ENCODE measurements at regions of chr18 and their contacts with region 1.

Region 1: GRCh38 chr18:9971313-9971920 is 57.6 kb downstream of the VAPA start:
- DNase-seq: peak; percentile 37 to 82 (median 56)
- ATAC-seq: peak; percentile 61
- H3K4me3 ChIP-seq: no peak overlapping the region
- H3K4me3 Mint-ChIP-seq: no peak overlapping the region
- H3K27ac ChIP-seq: no peak overlapping the region
- H3K27ac Mint-ChIP-seq: no peak overlapping the region
- H3K4me1 ChIP-seq: peaks cover 15% of the 10 kb centered on the region
- H3K4me1 Mint-ChIP-seq: peaks cover 23% of the 10 kb centered on the region
- H3K27me3 ChIP-seq: peaks cover 20 to 27% of the 10 kb centered on the region in 2 experiments
- H3K27me3 Mint-ChIP-seq: peaks cover 34% of the 10 kb centered on the region
- CTCF ChIP-seq: peak; percentile 90

Region 2: DNA sequence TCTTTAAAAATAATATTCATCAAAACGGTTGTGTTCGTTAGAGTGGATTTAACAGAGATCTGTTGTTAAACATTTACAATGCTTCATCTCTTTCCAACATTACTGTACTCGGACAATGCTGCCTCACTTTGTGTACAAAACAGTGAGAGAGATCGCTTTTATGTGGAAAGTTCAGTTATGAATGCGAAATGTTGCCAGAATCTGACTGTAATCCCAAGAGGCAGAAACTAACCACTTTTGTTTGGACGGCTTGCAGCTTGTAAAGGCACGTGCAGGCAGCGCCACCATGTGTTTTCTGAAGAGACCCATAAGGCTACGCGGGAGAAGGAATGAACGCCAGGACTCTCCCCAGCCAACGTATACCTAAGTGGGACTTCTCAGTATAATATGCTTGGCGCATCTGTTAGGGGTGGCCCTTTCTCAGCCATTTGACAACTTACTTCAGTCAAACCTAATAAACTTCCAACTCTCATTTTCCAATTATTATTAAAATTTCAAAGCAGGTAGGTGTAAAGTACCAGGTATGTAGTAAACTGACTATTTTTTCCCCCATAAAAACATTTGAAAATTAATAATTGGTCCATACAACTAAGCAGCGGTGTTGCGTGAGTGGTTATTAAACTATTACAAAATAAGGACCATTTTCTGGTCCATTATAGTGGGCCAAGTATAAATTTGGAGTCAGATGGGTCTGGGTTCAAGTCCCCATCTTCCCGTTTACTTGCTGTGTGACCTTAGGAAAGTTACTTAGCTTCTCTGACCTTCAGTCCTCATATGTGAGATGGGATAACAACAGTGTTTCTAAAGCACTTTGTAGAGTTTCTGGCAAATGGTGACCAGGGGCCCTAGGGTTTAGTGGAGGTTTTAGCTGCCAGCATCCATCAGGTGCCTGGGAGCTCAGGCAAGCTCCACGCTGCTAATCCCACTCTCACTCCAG is 548.9 kb after region 1 on chr18:
- CTCF ChIA-PET with region 1: interaction called, 14 read pairs
- POLR2A ChIA-PET with region 1: no interaction called
- intact Hi-C with region 1: loop called (anchors 1 kb)
- DNase-seq: peak; percentile 16 to 83 (median 46)
- ATAC-seq: peak; percentile 96
- H3K4me3 ChIP-seq: no peak overlapping the region
- H3K4me3 Mint-ChIP-seq: no peak overlapping the region
- H3K27ac ChIP-seq: no peak overlapping the region
- H3K27ac Mint-ChIP-seq: no peak overlapping the region
- H3K4me1 ChIP-seq: peaks cover 11% of the 10 kb centered on the region
- H3K4me1 Mint-ChIP-seq: peaks cover 17% of the 10 kb centered on the region
- H3K27me3 ChIP-seq: peaks cover 16 to 21% of the 10 kb centered on the region in 2 experiments
- H3K27me3 Mint-ChIP-seq: peaks cover 50% of the 10 kb centered on the region
- CTCF ChIP-seq: peak; percentile 68

Region 3: DNA sequence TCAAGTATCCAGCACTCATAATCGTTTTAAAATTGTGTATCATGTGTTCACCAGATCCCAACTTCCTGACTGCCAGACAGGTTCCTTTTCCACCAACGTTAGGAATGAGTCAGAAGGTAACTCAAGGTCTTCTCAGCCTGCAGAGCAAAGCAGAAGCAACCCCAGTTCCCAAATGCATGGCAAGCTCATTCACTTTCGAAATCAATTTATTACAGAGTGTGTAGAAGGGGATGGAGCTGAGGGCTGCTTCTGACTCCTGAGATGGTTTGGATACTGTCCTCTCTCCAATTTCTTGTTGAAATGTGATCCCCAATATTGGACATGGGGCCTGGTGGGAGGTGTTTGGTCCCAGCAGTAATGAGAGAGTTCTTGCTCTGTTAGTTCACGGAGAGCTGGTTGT is 1063.5 kb after region 1 on chr18:
- CTCF ChIA-PET with region 1: no interaction called
- POLR2A ChIA-PET with region 1: no interaction called
- intact Hi-C with region 1: loop called (anchors 5 to 10 kb)
- DNase-seq: no peak
- ATAC-seq: no peak
- H3K4me3 ChIP-seq: no peak overlapping the region
- H3K4me3 Mint-ChIP-seq: no peak overlapping the region
- H3K27ac ChIP-seq: no peak overlapping the region
- H3K27ac Mint-ChIP-seq: no peak overlapping the region
- H3K4me1 ChIP-seq: no peaks in the 10 kb centered on the region
- H3K4me1 Mint-ChIP-seq: no peaks in the 10 kb centered on the region
- H3K27me3 ChIP-seq: no peaks in the 10 kb centered on the region
- H3K27me3 Mint-ChIP-seq: no peaks in the 10 kb centered on the region
- CTCF ChIP-seq: no peak

Region 4: GRCh38 chr18:11149441-11150270 is 1178.2 kb after region 1 on chr18 and contains the start of gene PIEZO2:
- CTCF ChIA-PET with region 1: no interaction called
- POLR2A ChIA-PET with region 1: no interaction called
- intact Hi-C with region 1: loop called in 1 of 2 experiments (anchors 10 kb)
- DNase-seq: peak in 3 of 14 experiments; percentile 3 to 32 (median 19)
- ATAC-seq: no peak
- H3K4me3 ChIP-seq: no peak within 1 kb of the TSS
- H3K4me3 Mint-ChIP-seq: no peak within 1 kb of the TSS
- H3K27ac ChIP-seq: no peak within 1 kb of the TSS
- H3K27ac Mint-ChIP-seq: no peak within 1 kb of the TSS
- H3K4me1 ChIP-seq: no peaks in the 10 kb centered on the region
- H3K4me1 Mint-ChIP-seq: no peaks in the 10 kb centered on the region
- H3K27me3 ChIP-seq: peaks cover 16 to 35% of the 10 kb centered on the region in 2 experiments
- H3K27me3 Mint-ChIP-seq: peaks cover 72% of the 10 kb centered on the region
- CTCF ChIP-seq: no peak
- total RNA-seq, gene PIEZO2: not detected

Region 5: GRCh38 chr18:11553098-11553940 is 1581.9 kb after region 1 on chr18:
- CTCF ChIA-PET with region 1: no interaction called
- POLR2A ChIA-PET with region 1: no interaction called
- intact Hi-C with region 1: loop called in 1 of 2 experiments (anchors 5 kb)
- DNase-seq: peak in 5 of 14 experiments; percentile 6 to 66 (median 44)
- ATAC-seq: peak; percentile 26
- H3K4me3 ChIP-seq: no peak overlapping the region
- H3K4me3 Mint-ChIP-seq: no peak overlapping the region
- H3K27ac ChIP-seq: no peak overlapping the region
- H3K27ac Mint-ChIP-seq: no peak overlapping the region
- H3K4me1 ChIP-seq: no peaks in the 10 kb centered on the region
- H3K4me1 Mint-ChIP-seq: peaks cover 3% of the 10 kb centered on the region
- H3K27me3 ChIP-seq: peaks cover 0 to 3% of the 10 kb centered on the region in 2 experiments
- H3K27me3 Mint-ChIP-seq: peaks cover 5% of the 10 kb centered on the region
- CTCF ChIP-seq: peak; percentile 91